Right ventricle myocardium superior (tissue), 1 donor: ENCODE measurements at regions of chr6 and their contacts with region 1.

Region 1: DNA sequence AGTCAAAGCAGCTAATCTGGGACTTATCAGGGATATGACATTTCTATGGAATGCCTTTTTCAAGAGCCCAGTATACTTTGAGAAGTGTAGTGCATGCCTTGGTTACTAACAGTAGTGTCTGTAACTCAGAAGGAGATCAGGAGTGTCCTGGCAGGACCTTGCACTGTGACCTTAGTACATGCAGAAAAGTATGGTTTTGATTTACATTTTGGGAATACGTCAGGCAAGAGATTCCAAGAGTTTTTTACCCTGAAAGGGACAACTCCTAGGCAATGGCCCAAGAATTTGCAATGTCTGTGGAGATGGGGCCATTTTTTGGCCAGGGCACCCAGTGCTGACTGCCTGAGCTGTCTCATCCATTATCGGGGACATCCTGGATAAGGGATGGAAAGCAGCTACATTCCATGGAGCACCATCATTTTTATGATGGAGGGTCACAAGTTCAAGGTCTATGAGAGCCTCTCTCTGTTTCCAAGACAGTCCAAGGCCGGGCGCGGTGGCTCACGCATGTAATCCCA is 80.2 kb downstream of the FAM50B start:
- DNase-seq: peak; percentile 53
- ATAC-seq: no peak

Region 2: DNA sequence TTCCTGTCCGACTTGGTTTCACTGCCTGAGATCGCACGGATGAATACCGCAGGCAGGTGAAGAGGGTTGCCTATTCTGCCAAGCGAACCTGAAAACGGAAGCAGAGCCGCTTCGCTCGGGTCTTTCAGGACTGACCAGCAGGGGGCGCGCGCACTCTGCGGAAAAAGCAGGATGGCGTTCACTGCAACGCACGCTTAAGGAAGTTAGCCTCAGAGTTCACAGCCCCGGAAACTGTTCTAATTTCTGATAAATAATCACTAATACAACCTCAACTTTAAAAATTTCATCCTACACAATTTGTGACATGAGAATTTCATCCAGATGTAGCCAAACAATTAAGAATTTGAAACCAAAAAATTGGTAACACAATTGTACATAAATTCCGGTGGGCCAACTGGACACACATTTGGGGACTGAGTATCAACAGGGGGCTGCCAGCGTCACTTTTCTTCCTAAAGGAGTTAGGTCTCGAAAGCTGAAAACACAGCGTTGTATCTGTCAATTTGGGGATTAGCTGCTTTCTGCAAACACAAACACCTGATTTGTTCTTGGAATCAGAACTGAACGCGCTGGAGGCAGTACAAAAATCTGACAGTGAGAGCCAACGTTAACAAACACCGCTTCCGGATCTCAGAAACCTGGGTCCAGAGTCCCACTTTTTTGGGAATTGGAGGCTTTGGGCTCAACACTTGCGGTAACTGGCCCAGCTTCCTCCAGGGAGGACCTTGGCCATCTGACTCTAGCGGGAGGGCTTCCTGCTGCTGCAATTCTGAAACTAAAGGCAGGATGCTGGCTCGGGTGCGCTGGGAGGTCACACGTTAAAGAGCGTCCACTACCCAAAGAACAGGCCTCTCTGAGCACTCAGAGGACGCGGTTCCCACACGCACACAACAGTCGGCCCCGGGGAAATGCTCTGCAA is 186.7 kb before region 1 on chr6:
- intact Hi-C with region 1: loop called (anchors 2 kb)
- DNase-seq: peak; percentile 92
- ATAC-seq: peak; percentile 87

Region 3: DNA sequence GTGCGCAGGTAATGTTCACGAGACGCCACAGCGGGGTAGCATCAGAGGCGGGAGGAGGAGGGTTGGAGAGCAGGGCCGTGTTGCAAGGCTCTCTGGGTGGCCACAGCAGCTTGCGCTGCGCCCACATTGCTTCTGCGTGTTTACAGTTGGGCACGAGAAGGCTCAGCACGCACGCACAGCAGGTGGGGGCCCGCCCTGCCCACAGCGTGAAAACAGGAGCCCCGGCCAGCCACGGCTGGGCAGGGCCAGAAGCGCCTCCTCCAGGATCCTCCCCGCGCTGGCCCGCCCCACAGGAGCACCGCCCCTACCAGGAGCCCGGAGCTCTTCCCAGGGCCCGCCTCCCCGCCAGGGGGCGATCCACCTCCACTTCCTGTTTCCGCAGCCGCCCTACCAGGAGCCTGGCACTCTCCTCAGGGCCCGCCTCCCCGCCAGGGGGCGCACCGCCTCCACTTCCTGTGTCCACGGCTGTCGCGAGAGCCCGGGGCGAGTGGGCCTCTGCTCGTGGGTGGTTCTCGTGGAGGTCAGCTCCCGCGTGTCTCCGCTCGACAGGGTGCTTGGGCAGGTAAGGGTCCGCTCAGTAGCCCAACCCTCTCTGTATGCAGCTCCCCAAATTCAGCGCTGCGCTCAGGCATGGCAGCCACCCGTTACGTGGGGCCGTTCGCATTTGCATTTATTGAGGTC is 80.3 kb before region 1 on chr6 and contains the start of gene FAM50B:
- intact Hi-C with region 1: loop called (anchors 2 kb)
- DNase-seq: peak; percentile 96
- ATAC-seq: peak; percentile 98
- total RNA-seq, gene FAM50B: 28.9 TPM

Region 4: DNA sequence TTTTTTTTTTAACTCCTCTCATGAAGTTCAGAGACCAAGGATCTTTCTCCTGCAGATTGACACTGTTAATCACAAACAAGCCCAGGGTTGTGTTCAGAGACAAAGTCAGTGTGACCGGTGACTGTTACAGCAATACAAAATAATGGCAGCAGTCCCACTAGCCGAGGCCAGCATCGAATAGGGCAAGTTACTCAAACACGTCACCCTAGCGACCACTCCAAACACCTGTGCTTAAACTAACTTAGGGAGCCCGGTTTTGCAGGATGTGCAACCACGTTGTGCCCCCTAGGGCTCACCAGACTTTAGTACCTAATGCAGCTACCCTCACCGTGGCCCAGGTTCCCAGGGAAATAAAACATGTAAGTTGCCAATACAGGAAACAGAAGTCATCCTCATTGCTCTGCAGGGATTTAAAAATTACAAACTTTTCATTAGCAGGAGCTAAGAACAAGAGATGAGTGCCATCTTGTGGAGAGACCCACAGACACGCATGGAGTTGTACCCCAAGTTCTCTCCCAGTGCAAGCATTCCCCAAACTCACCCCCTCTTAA is 42.1 kb before region 1 on chr6:
- intact Hi-C with region 1: loop called (anchors 5 kb)
- DNase-seq: no peak
- ATAC-seq: peak; percentile 25

Region 5: GRCh38 chr6:4196359-4196758 is 267.0 kb after region 1 on chr6:
- intact Hi-C with region 1: no loop called
- DNase-seq: no peak
- ATAC-seq: no peak